GM12878 (cell line): ENCODE measurements at regions of chr11 and their contacts with region 1.

Region 1: DNA sequence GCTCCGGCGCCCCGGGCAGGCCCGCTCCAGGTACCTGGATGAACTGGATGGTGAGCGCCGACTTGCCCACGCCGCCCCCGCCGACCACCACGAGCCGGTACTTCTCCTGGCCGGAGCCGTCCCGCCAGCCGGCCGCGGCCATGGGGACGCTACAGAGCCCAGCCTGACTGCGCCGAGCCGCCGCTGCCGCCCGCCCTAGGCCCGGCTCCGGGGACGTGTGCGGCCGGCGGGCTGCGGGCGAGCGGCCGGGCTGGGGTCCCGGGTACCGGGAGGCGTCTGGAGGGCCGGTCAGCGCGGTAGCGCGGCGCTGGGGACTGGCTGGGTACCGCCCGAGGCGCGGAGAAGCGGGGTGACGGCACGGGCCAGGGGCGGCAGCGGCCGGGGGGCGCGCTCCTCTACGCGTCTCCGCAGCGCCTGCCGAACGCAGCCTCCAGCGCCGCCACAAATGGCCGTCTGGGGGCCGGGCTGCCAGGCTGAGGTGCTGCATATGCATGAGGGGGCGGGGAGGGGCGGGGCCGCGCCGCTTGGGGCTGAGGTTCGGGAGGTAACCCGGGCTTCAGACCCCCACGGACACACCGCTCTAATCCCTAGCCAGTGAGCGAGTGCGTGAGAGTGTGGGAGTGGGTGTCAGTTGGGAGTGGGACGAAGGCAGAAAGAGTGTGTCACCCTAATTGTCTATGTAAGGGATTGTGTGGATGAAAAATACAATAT is at the start of gene RRAS2:
- DNase-seq: no peak
- ATAC-seq: peak; percentile 88
- H3K4me3 ChIP-seq: peak within 1 kb of the TSS; percentile 90
- H3K27ac ChIP-seq: peak within 1 kb of the TSS; percentile 86
- H3K4me1 ChIP-seq: peaks cover 4% of the 10 kb centered on the region; the same call in 1 of the 2 replicates
- H3K27me3 ChIP-seq: no peaks in the 10 kb centered on the region
- CTCF ChIP-seq: 0 out of 6 replicates have a peak, but pooled peaks of 2 of the 3 experiments have one; percentile 6 to 11
- EP300 ChIP-seq: no peak
- POLR2A ChIP-seq: peak; percentile 92
- RAD21 ChIP-seq: 0 out of 2 replicates have a peak, but pooled peaks have one; percentile 14
- polyA plus RNA-seq, gene RRAS2: 26.9 to 33.3 TPM

Region 2: DNA sequence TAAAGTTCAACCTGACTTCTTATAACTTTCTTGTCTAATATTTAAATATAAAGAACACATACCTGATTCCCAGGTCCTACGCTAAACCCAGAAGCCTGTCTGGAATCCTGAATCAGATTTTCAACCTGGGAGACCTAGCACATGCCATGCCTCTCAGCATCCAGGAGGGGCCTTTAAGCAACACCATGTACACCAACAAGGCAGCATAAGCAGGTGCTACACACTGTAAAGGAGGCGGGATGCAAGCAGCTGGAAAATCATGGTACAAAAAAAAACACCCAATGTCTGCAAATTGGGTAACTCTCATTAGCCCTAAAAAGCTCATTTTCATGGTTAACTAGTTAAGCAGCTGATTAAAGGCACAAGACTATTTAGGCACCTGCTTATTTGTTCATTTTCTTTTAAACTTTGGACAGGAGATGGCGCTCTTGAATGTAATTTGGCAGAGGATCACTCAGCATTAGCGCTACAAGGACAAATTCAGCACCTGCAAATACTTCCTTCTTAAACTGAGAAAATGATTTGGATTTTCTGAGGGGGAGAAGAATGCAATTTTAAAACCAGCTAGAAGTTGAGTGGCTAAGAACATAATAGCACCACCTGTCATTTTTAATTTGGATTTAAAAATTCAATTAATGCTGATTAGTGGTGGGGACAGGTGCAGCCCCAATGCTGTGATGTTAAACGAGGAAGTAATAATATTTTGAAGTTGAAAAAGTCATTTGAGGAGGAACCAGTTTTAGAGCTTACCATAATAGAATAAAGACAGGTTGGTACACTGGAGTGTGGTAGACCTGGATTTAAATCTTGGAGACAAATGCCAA is 586.4 kb before region 1 on chr11:
- CTCF ChIA-PET with region 1: no interaction called
- POLR2A ChIA-PET with region 1: no interaction called
- RAD21 ChIA-PET with region 1: no interaction called
- SMC1A ChIA-PET with region 1: no interaction called
- in situ Hi-C with region 1: no loop called
- intact Hi-C with region 1: no loop called
- DNase-seq: peak; percentile 11
- ATAC-seq: peak; percentile 88
- H3K4me3 ChIP-seq: no peak overlapping the region
- H3K27ac ChIP-seq: no peak overlapping the region
- H3K4me1 ChIP-seq: no peaks in the 10 kb centered on the region
- H3K27me3 ChIP-seq: no peaks in the 10 kb centered on the region
- CTCF ChIP-seq: peak; percentile 24 to 58 (median 54); a peak in 4 of 6 replicates
- EP300 ChIP-seq: no peak
- POLR2A ChIP-seq: no peak
- RAD21 ChIP-seq: peak; percentile 73

Region 3: GRCh38 chr11:14270690-14271542 is 88.0 kb before region 1 on chr11:
- CTCF ChIA-PET with region 1: no interaction called
- POLR2A ChIA-PET with region 1: no interaction called
- RAD21 ChIA-PET with region 1: no interaction called
- SMC1A ChIA-PET with region 1: no interaction called
- in situ Hi-C with region 1: no loop called
- intact Hi-C with region 1: no loop called
- DNase-seq: peak; percentile 33
- ATAC-seq: peak; percentile 85
- H3K4me3 ChIP-seq: peak overlapping the region; percentile 43; the same call in 1 of the 2 replicates
- H3K27ac ChIP-seq: peak overlapping the region; percentile 33
- H3K4me1 ChIP-seq: peaks cover 21% of the 10 kb centered on the region
- H3K27me3 ChIP-seq: no peaks in the 10 kb centered on the region
- CTCF ChIP-seq: no peak
- EP300 ChIP-seq: no peak
- POLR2A ChIP-seq: no peak
- RAD21 ChIP-seq: no peak

Region 4: DNA sequence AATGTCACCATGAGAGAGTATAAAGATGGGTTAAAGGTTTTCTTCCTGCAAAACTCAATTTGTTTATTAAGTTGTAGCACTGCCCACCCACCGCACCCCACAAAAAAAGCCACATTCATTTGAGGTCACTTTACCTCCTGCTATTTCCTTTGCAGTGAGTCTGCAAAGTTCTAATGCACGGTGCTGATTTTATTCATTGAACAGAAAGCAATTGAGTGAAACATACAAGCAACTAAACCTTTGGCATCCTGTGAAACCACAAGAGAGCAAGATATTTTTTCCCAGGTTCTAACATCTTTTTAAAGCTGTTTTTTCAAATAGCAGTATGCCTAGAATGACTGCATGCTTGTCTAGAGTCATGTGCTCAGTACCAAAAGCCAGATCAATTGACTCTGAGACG is 38.9 kb before region 1 on chr11:
- CTCF ChIA-PET with region 1: interaction called, 5 read pairs
- POLR2A ChIA-PET with region 1: interaction called, 18 read pairs
- RAD21 ChIA-PET with region 1: interaction called, 12 read pairs
- SMC1A ChIA-PET with region 1: interaction called, 49 read pairs
- in situ Hi-C with region 1: no loop called
- intact Hi-C with region 1: no loop called
- DNase-seq: peak; percentile 90
- ATAC-seq: peak; percentile 40
- H3K4me3 ChIP-seq: peak overlapping the region; percentile 57
- H3K27ac ChIP-seq: peak overlapping the region; percentile 69
- H3K4me1 ChIP-seq: peaks cover 30% of the 10 kb centered on the region
- H3K27me3 ChIP-seq: no peaks in the 10 kb centered on the region
- CTCF ChIP-seq: no peak
- EP300 ChIP-seq: peak in 1 of 2 experiments; percentile 58; a peak in 1 of 4 replicates
- POLR2A ChIP-seq: no peak
- RAD21 ChIP-seq: no peak

Region 5: GRCh38 chr11:14336507-14337503 is 22.1 kb before region 1 on chr11:
- CTCF ChIA-PET with region 1: interaction called, 3 read pairs
- POLR2A ChIA-PET with region 1: interaction called, 6 read pairs
- RAD21 ChIA-PET with region 1: interaction called, 10 read pairs
- SMC1A ChIA-PET with region 1: interaction called, 11 read pairs
- in situ Hi-C with region 1: no loop called
- intact Hi-C with region 1: no loop called
- DNase-seq: no peak
- ATAC-seq: peak; percentile 40
- H3K4me3 ChIP-seq: no peak overlapping the region; the same call in 1 of the 2 replicates
- H3K27ac ChIP-seq: no peak overlapping the region; the same call in 1 of the 2 replicates
- H3K4me1 ChIP-seq: peaks cover 22% of the 10 kb centered on the region; the same call in 1 of the 2 replicates
- H3K27me3 ChIP-seq: no peaks in the 10 kb centered on the region
- CTCF ChIP-seq: no peak
- EP300 ChIP-seq: no peak
- POLR2A ChIP-seq: no peak
- RAD21 ChIP-seq: no peak

Region 6: GRCh38 chr11:14342906-14343305 is 16.0 kb before region 1 on chr11:
- CTCF ChIA-PET with region 1: interaction called, 7 read pairs
- POLR2A ChIA-PET with region 1: interaction called, 6 read pairs
- RAD21 ChIA-PET with region 1: interaction called, 10 read pairs
- SMC1A ChIA-PET with region 1: interaction called, 11 read pairs
- in situ Hi-C with region 1: no loop called
- intact Hi-C with region 1: no loop called
- DNase-seq: no peak
- ATAC-seq: peak; percentile 70
- H3K4me3 ChIP-seq: no peak overlapping the region
- H3K27ac ChIP-seq: peak overlapping the region; percentile 46; the same call in 1 of the 2 replicates
- H3K4me1 ChIP-seq: peaks cover 3% of the 10 kb centered on the region; the same call in 1 of the 2 replicates
- H3K27me3 ChIP-seq: no peaks in the 10 kb centered on the region
- CTCF ChIP-seq: no peak
- EP300 ChIP-seq: no peak
- POLR2A ChIP-seq: no peak
- RAD21 ChIP-seq: no peak